Transverse colon (tissue), 4 donors: ENCODE measurements at regions of chrX and their contacts with region 1.

Region 1: DNA sequence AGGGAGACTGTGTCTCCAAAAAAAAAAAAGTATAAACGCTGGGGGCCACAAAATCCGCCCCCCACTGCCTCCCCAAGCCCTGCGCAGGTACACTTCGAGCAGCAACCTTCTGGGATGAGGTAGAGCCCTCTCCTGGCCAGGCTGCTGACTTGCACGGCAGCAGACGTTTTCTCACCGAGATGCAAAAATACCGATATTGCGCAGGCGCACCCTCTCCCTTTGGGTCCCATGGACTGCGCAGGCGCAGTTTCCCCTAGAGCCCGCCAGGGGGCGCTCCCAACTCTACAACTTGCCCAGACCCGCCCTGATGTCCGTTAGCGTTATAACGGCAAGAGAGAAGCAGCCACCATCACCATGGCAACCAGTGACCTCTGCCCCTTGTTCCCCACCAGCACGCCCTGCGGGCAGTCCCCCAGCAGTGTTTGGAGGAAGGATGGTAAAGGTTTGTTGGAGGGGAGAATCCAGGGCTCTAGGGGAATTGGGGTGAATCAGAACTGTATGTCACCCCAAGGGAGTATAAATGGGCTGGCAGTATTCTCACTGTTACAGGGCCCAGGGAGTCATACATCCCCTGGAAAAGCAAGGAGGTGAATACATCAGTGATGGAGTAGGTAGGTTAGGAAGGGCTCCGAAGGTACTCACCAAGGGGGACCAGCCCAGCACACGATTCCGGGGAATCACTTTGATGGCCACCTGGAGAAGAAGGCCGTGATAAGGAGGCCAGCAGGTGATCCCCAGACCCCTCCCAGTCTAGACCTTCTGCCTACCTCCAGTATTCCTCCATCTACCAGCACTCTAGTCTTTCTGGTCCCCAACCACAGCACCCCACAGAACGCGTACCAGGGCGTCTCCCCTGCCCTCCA is 1.5 kb downstream of the PIM2 start:
- DNase-seq: peak; percentile 92
- H3K4me3 ChIP-seq: peak overlapping the region in 3 of 4 donors; percentile 49 to 85 (median 68)
- H3K27ac ChIP-seq: peak overlapping the region; percentile 86 to 95 (median 94)
- H3K4me1 ChIP-seq: peaks cover 0 to 18% (median 8%) of the 10 kb centered on the region in 4 donors
- H3K27me3 ChIP-seq: no peaks in the 10 kb centered on the region
- CTCF ChIP-seq: peak; percentile 90 to 98 (median 94)
- EP300 ChIP-seq: no peak
- POLR2A ChIP-seq: no peak

Region 2: GRCh38 chrX:48631350-48632090 is 285.9 kb before region 1 on chrX:
- in situ Hi-C with region 1: loop called in 1 of 4 experiments (anchors 25 kb)
- intact Hi-C with region 1: no loop called
- DNase-seq: peak; percentile 85
- H3K4me3 ChIP-seq: no peak overlapping the region
- H3K27ac ChIP-seq: peak overlapping the region in 1 of 4 donors; percentile 10
- H3K4me1 ChIP-seq: peaks cover 0 to 6% (median 2%) of the 10 kb centered on the region in 4 donors
- H3K27me3 ChIP-seq: no peaks in the 10 kb centered on the region
- CTCF ChIP-seq: peak; percentile 6 to 58 (median 32)
- EP300 ChIP-seq: no peak
- POLR2A ChIP-seq: no peak

Region 3: GRCh38 chrX:49840679-49841078 is 923.3 kb after region 1 on chrX:
- in situ Hi-C with region 1: no loop called
- intact Hi-C with region 1: no loop called
- DNase-seq: peak; percentile 27
- H3K4me3 ChIP-seq: no peak overlapping the region
- H3K27ac ChIP-seq: no peak overlapping the region
- H3K4me1 ChIP-seq: no peaks in the 10 kb centered on the region
- H3K27me3 ChIP-seq: no peaks in the 10 kb centered on the region
- CTCF ChIP-seq: peak in 1 of 5 experiments; percentile 13
- EP300 ChIP-seq: no peak
- POLR2A ChIP-seq: no peak